Aorta (tissue), 5 donors: ENCODE measurements at regions of chr15 and their contacts with region 1.

Region 1: DNA sequence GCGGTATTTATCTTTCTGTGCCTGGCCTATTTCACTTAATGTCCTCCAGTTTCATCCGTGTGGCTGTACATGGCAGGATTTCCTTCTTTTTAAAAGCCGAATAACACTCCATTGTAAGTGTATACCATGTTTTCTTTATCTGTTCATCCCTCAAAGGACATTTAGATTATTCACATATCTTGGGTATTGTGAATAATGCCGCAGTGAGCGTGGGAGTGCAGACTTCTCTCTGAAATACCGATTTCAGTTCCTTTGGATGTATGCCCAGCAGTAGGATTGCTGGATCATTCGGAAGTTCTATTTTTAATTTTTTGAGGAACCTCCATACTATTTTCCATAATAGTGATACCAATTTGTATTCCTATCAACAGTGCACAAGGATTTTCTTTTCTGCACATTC is 136.1 kb downstream of the APBA2 start:
- DNase-seq: no peak
- ATAC-seq: no peak
- H3K4me3 ChIP-seq: no peak overlapping the region
- H3K27ac ChIP-seq: no peak overlapping the region
- H3K4me1 ChIP-seq: no peaks in the 10 kb centered on the region
- H3K27me3 ChIP-seq: no peaks in the 10 kb centered on the region

Region 2: GRCh38 chr15:28904541-28905315 is 117.2 kb before region 1 on chr15:
- intact Hi-C with region 1: no loop called
- DNase-seq: peak in 1 of 2 donors; percentile 59
- ATAC-seq: no peak
- H3K4me3 ChIP-seq: no peak overlapping the region
- H3K27ac ChIP-seq: no peak overlapping the region
- H3K4me1 ChIP-seq: no peaks in the 10 kb centered on the region
- H3K27me3 ChIP-seq: no peaks in the 10 kb centered on the region

Region 3: GRCh38 chr15:29089731-29090616 is 68.1 kb after region 1 on chr15:
- intact Hi-C with region 1: loop called in 1 of 2 experiments (anchors 10 kb)
- DNase-seq: peak; percentile 32 to 51
- ATAC-seq: no peak
- H3K4me3 ChIP-seq: no peak overlapping the region
- H3K27ac ChIP-seq: no peak overlapping the region
- H3K4me1 ChIP-seq: no peaks in the 10 kb centered on the region
- H3K27me3 ChIP-seq: no peaks in the 10 kb centered on the region